ENCODE measurements at regions of chr12 and their contacts with region 1.

Region 1: DNA sequence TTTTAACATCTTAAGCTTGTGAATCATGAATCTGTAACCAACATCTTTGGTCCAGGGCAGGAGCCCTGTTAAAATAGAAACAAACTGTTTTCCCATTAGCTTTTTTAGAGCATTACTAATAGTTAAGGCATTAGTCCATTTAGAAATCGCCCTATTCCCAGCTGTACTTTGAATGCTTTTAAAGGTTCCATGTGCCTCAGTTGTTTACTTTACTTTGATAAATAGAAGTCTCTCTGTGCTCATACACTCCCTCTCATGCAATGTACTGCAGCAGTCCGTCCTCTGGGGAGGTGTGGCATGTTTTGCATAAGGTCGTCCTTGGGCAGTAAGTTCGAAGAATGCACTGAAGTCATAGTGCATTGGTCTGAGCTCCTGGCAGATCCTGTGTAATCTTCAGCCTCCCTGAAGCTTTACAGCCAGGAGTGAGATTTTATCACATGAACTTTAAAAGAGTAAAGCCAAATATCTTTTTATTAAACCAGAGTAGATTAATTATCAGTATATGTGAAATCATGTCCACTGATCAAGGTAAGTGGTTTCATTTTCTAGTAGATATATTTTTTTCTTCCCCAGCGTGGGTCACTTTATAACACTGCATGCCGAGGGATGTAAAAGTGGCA is 134.7 kb downstream of the FGD4 start:
- DNase-seq: peak; percentile 89
- H3K4me3 ChIP-seq: peak overlapping the region; percentile 39 to 73 (median 67)
- H3K27ac ChIP-seq: peak overlapping the region; percentile 67
- H3K4me1 ChIP-seq: peaks cover 30% of the 10 kb centered on the region
- H3K27me3 ChIP-seq: no peaks in the 10 kb centered on the region
- CTCF ChIP-seq: no peak
- POLR2A ChIP-seq: peak; percentile 75

Region 2: GRCh38 chr12:32334371-32334777 is 199.7 kb before region 1 on chr12:
- CTCF ChIA-PET with region 1: no interaction called
- POLR2A ChIA-PET with region 1: no interaction called
- dilution Hi-C with region 1: no loop called
- intact Hi-C with region 1: no loop called
- DNase-seq: no peak
- H3K4me3 ChIP-seq: no peak overlapping the region
- H3K27ac ChIP-seq: no peak overlapping the region
- H3K4me1 ChIP-seq: peaks cover 31% of the 10 kb centered on the region
- H3K27me3 ChIP-seq: no peaks in the 10 kb centered on the region
- CTCF ChIP-seq: no peak
- POLR2A ChIP-seq: no peak

Region 3: GRCh38 chr12:32365473-32366064 is 168.5 kb before region 1 on chr12:
- CTCF ChIA-PET with region 1: interaction called, 3 read pairs
- POLR2A ChIA-PET with region 1: no interaction called
- dilution Hi-C with region 1: no loop called
- intact Hi-C with region 1: loop called (anchors 2 kb)
- DNase-seq: peak; percentile 85
- H3K4me3 ChIP-seq: no peak overlapping the region
- H3K27ac ChIP-seq: no peak overlapping the region
- H3K4me1 ChIP-seq: peaks cover 2% of the 10 kb centered on the region
- H3K27me3 ChIP-seq: no peaks in the 10 kb centered on the region
- CTCF ChIP-seq: peak; percentile 66 to 70
- POLR2A ChIP-seq: no peak

Region 4: GRCh38 chr12:32501835-32502333 is 32.2 kb before region 1 on chr12:
- CTCF ChIA-PET with region 1: interaction called, 3 read pairs
- POLR2A ChIA-PET with region 1: no interaction called
- dilution Hi-C with region 1: no loop called
- intact Hi-C with region 1: loop called (anchors 1 kb)
- DNase-seq: peak; percentile 59
- H3K4me3 ChIP-seq: peak overlapping the region in 1 of 3 experiments; percentile 33
- H3K27ac ChIP-seq: no peak overlapping the region
- H3K4me1 ChIP-seq: peaks cover 43% of the 10 kb centered on the region
- H3K27me3 ChIP-seq: no peaks in the 10 kb centered on the region
- CTCF ChIP-seq: no peak
- POLR2A ChIP-seq: no peak

Region 5: DNA sequence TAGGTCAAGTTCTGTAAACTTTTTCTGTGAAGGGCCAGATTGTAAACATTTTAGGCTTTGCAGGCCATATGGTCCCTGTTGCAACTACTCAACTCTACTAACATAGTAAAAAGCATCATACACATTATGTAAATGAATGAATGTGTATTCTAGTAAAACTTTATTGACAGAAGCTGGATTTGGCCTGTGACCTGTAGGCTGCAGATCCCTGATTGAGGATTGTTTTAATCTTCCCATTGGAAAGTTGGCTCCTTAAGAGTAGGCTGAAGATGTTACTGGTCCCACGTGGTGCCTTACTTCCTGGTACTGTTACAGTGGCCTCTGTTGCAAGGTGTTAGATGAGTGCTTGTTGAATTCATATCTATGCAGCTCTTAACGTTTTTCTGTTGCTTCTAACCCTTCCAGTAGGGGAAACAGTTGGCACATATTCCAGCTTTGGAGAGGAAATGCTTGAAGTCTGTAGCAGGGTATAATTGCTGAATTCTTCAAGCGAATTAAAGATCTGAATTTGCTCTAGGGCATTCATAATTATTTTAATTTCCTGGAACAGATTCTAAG is 11.4 kb after region 1 on chr12:
- CTCF ChIA-PET with region 1: interaction called, 11 read pairs
- POLR2A ChIA-PET with region 1: no interaction called
- dilution Hi-C with region 1: no loop called
- intact Hi-C with region 1: no loop called
- DNase-seq: peak; percentile 59
- H3K4me3 ChIP-seq: no peak overlapping the region
- H3K27ac ChIP-seq: no peak overlapping the region
- H3K4me1 ChIP-seq: peaks cover 32% of the 10 kb centered on the region
- H3K27me3 ChIP-seq: no peaks in the 10 kb centered on the region
- CTCF ChIP-seq: no peak
- POLR2A ChIP-seq: no peak

Region 6: GRCh38 chr12:32679091-32679919 is 145.2 kb after region 1 on chr12 and contains the start of gene DNM1L:
- CTCF ChIA-PET with region 1: no interaction called
- POLR2A ChIA-PET with region 1: no interaction called
- dilution Hi-C with region 1: no loop called
- intact Hi-C with region 1: loop called (anchors 5 kb)
- DNase-seq: peak; percentile 96
- H3K4me3 ChIP-seq: peak within 1 kb of the TSS; percentile 30 to 91 (median 74)
- H3K27ac ChIP-seq: peak within 1 kb of the TSS; percentile 29
- H3K4me1 ChIP-seq: peaks cover 11% of the 10 kb centered on the region
- H3K27me3 ChIP-seq: no peaks in the 10 kb centered on the region
- CTCF ChIP-seq: peak in 1 of 2 donors; percentile 21
- POLR2A ChIP-seq: peak; percentile 91
- total RNA-seq, gene DNM1L: 90.1 and 103 TPM in 2 replicates

Measured in endothelial cell of umbilical vein (primary cell).